Mucosa of descending colon (tissue), 3 donors: ENCODE measurements at regions of chr7 and their contacts with region 1.

Region 1: GRCh38 chr7:155598810-155599210 is 45.7 kb upstream of the RBM33 start:
- DNase-seq: peak; percentile 73 to 97 (median 89)
- ATAC-seq: peak; percentile 90
- H3K4me3 ChIP-seq: no peak overlapping the region
- H3K4me1 ChIP-seq: peaks cover 5% of the 10 kb centered on the region
- CTCF ChIP-seq: peak; percentile 93

Region 2: GRCh38 chr7:155738652-155739537 is 140.1 kb after region 1 on chr7:
- intact Hi-C with region 1: loop called (anchors 10 kb)
- DNase-seq: peak; percentile 60 to 94 (median 85)
- ATAC-seq: peak; percentile 87
- H3K4me3 ChIP-seq: no peak overlapping the region
- H3K4me1 ChIP-seq: no peaks in the 10 kb centered on the region
- CTCF ChIP-seq: peak; percentile 13

Region 3: DNA sequence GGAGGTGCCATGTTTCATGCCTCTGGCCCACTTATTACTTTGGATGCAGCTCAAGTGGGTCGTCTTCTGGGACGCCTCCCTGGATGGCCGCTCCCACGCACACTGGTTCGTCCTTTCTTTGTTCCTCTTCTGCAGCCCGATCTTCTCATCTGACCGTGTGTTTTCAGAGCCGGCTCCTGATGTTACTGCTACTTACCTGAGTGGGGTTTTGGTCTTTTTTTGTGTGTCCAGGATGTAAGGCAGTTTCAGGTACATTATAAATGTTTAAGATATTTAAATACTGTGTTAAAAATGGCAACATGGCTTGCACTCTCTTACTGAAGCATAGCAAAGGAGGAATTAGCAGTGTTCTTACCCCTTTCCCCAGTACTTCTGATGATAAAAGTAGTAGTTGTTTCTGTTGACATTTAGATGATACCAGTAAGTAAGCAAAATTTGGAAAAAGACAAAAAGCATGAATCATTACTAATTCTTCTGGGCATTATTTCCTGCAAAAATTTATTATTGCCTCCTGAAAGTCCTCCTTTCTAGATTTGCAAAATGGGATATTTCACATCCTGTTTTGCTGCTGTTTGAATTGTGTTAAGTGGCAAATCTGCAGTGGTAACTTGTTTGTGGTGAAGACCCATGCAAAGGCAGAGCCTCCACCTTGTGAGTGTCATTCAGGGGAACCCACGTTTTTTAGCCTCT is 154.1 kb after region 1 on chr7:
- intact Hi-C with region 1: no loop called
- DNase-seq: no peak
- ATAC-seq: peak; percentile 17
- H3K4me3 ChIP-seq: no peak overlapping the region
- H3K4me1 ChIP-seq: peaks cover 10% of the 10 kb centered on the region
- CTCF ChIP-seq: no peak

Region 4: GRCh38 chr7:155763691-155764437 is 165.1 kb after region 1 on chr7:
- intact Hi-C with region 1: loop called (anchors 10 kb)
- DNase-seq: no peak
- ATAC-seq: peak; percentile 37
- H3K4me3 ChIP-seq: no peak overlapping the region
- H3K4me1 ChIP-seq: peaks cover 7% of the 10 kb centered on the region
- CTCF ChIP-seq: no peak